ENCODE measurements at regions of chr11 and their contacts with region 1.

Region 1: GRCh38 chr11:11798586-11799438 is 43.0 kb upstream of the USP47 start:
- DNase-seq: peak; percentile 44 to 90 (median 77)
- ATAC-seq: peak; percentile 93
- H3K4me3 ChIP-seq: no peak overlapping the region
- H3K4me3 Mint-ChIP-seq: no peak overlapping the region
- H3K27ac ChIP-seq: no peak overlapping the region
- H3K27ac Mint-ChIP-seq: no peak overlapping the region
- H3K4me1 ChIP-seq: no peaks in the 10 kb centered on the region
- H3K4me1 Mint-ChIP-seq: no peaks in the 10 kb centered on the region
- H3K27me3 ChIP-seq: no peaks in the 10 kb centered on the region
- H3K27me3 Mint-ChIP-seq: peaks cover 28% of the 10 kb centered on the region
- CTCF ChIP-seq: peak; percentile 96

Region 2: GRCh38 chr11:10139656-10140055 is 1659.2 kb before region 1 on chr11:
- CTCF ChIA-PET with region 1: no interaction called
- POLR2A ChIA-PET with region 1: no interaction called
- intact Hi-C with region 1: no loop called
- DNase-seq: no peak
- ATAC-seq: no peak
- H3K4me3 ChIP-seq: no peak overlapping the region
- H3K4me3 Mint-ChIP-seq: no peak overlapping the region
- H3K27ac ChIP-seq: no peak overlapping the region
- H3K27ac Mint-ChIP-seq: no peak overlapping the region
- H3K4me1 ChIP-seq: no peaks in the 10 kb centered on the region
- H3K4me1 Mint-ChIP-seq: no peaks in the 10 kb centered on the region
- H3K27me3 ChIP-seq: no peaks in the 10 kb centered on the region
- H3K27me3 Mint-ChIP-seq: no peaks in the 10 kb centered on the region
- CTCF ChIP-seq: no peak

Region 3: DNA sequence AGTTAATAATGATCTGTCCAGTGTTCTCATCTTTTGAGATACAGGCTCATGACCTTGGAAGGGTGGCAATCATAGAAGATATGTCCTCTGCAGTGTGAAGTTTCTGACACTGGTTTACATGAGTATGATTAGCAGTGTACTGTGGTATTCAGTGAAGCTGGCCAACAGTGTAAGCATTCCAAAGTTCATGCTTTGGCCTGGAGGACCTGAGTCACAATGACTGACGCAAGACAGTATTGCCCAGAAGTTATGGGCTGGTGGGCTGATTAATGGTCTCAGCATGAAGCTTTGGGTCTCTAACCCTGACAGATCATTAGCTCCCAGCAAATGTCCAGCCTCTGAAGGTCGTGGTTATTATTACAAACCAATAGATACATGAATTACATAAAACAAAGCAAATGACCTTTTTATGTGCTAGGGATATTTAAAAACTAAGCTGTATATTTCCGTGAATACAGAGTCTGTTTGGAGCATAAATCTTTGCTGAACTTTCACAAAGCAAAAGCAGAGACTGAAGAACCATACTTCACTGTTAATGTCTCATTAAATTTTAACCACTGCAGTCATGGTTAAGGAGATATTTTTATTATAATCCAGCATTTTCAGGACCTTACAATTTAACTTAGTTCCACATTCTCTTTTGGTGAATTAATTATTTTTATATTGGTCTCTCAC is 14.6 kb after region 1 on chr11:
- CTCF ChIA-PET with region 1: interaction called, 32 read pairs
- POLR2A ChIA-PET with region 1: interaction called, 3 read pairs
- intact Hi-C with region 1: no loop called
- DNase-seq: no peak
- ATAC-seq: no peak
- H3K4me3 ChIP-seq: no peak overlapping the region
- H3K4me3 Mint-ChIP-seq: no peak overlapping the region
- H3K27ac ChIP-seq: no peak overlapping the region
- H3K27ac Mint-ChIP-seq: no peak overlapping the region
- H3K4me1 ChIP-seq: no peaks in the 10 kb centered on the region
- H3K4me1 Mint-ChIP-seq: no peaks in the 10 kb centered on the region
- H3K27me3 ChIP-seq: peaks cover 0 to 2% of the 10 kb centered on the region in 2 experiments
- H3K27me3 Mint-ChIP-seq: peaks cover 7% of the 10 kb centered on the region
- CTCF ChIP-seq: no peak

Region 4: DNA sequence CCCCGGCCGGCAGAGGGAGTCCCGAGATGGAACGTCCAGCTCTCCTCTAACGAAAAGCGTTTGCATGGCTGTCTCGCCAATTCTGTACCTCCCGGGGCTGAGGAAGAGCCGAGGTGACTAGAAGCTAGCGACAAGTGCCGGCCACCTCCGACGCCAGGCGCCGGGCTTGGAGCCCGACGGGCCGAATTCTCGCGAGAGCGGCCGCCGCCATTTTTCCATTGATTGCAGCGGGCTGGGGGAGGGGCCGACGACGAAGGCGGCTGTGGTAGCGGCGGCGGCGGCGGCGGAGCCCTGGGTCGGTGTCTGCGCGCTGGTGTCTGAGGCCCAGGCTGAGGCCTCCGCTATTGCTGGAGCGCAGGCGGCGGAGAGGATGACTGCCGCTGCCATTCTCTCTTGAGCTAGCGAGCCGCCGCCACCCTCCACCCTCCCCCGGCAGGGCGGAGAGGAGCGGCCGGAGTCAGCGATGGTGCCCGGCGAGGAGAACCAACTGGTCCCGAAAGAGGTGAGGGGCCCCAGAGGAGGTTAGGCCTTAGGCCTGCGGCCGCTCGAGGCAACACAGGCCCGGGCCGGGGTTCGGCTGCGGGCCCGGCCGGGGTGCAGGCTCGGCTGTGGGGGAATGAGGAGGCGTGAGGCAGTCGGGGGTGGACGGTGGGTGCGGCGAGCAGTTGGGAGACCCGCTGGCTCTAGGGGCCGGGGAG is 43.1 kb after region 1 on chr11 and contains the start of gene USP47:
- CTCF ChIA-PET with region 1: interaction called, 22 read pairs
- POLR2A ChIA-PET with region 1: no interaction called
- intact Hi-C with region 1: no loop called
- DNase-seq: peak; percentile 90 to 98 (median 94)
- ATAC-seq: peak; percentile 79
- H3K4me3 ChIP-seq: peak within 1 kb of the TSS; percentile 77 to 92
- H3K4me3 Mint-ChIP-seq: no peak within 1 kb of the TSS
- H3K27ac ChIP-seq: peak within 1 kb of the TSS; percentile 92 to 95
- H3K27ac Mint-ChIP-seq: no peak within 1 kb of the TSS
- H3K4me1 ChIP-seq: peaks cover 37% of the 10 kb centered on the region
- H3K4me1 Mint-ChIP-seq: peaks cover 26% of the 10 kb centered on the region
- H3K27me3 ChIP-seq: no peaks in the 10 kb centered on the region
- H3K27me3 Mint-ChIP-seq: peaks cover 6% of the 10 kb centered on the region
- CTCF ChIP-seq: peak; percentile 46
- total RNA-seq, gene USP47: 93.4 to 100 TPM

Region 5: GRCh38 chr11:11876458-11876857 is 77.6 kb after region 1 on chr11:
- CTCF ChIA-PET with region 1: interaction called, 20 read pairs
- POLR2A ChIA-PET with region 1: no interaction called
- intact Hi-C with region 1: no loop called
- DNase-seq: peak in 2 of 9 experiments; percentile 17 to 40
- ATAC-seq: no peak
- H3K4me3 ChIP-seq: no peak overlapping the region
- H3K4me3 Mint-ChIP-seq: no peak overlapping the region
- H3K27ac ChIP-seq: no peak overlapping the region
- H3K27ac Mint-ChIP-seq: no peak overlapping the region
- H3K4me1 ChIP-seq: peaks cover 22% of the 10 kb centered on the region
- H3K4me1 Mint-ChIP-seq: peaks cover 64% of the 10 kb centered on the region
- H3K27me3 ChIP-seq: no peaks in the 10 kb centered on the region
- H3K27me3 Mint-ChIP-seq: no peaks in the 10 kb centered on the region
- CTCF ChIP-seq: no peak

Region 6: DNA sequence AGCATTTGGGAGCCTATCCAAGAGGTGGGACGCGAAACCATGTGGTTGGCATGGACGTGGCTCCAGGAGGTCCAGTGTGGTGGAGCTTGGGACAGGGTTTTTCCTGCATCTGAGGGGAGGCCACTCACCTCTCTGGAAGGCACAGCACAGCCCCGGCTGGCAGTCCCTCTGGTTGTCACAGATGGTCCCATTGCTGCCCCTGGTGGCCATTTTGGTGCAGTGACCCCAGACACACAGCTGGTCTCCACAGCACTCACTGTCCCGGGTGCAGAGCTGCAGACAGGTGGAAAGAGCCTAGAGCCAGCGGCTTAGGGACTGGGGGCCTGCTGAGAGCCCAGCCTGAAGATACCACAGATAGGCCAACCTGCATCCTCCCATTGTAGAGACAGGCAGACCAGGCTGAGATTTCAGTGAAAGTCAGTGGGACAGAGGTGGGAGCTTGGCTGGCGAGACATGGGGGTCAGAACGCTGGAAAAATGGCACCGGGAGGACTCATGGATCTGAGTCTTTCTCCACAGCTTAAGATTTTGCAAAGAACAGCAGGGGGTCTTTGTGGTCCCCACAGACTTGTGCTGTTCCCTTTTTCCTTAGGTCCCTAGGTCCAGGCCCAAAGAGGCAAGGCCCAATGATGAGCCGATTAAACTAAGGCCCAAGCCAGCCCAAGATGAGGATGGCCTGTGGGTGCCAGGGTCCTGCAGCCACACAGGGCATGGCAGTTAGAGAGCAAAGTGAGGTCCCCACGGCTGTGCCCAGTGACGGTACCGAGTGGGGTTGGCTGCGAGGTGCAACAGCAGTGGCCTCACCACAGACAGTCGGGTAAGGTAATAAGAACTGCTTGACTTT is 168.2 kb after region 1 on chr11:
- CTCF ChIA-PET with region 1: interaction called, 13 read pairs
- POLR2A ChIA-PET with region 1: no interaction called
- intact Hi-C with region 1: no loop called
- DNase-seq: peak; percentile 46 to 76 (median 63)
- ATAC-seq: peak; percentile 97
- H3K4me3 ChIP-seq: no peak overlapping the region
- H3K4me3 Mint-ChIP-seq: no peak overlapping the region
- H3K27ac ChIP-seq: no peak overlapping the region
- H3K27ac Mint-ChIP-seq: no peak overlapping the region
- H3K4me1 ChIP-seq: no peaks in the 10 kb centered on the region
- H3K4me1 Mint-ChIP-seq: peaks cover 3% of the 10 kb centered on the region
- H3K27me3 ChIP-seq: no peaks in the 10 kb centered on the region
- H3K27me3 Mint-ChIP-seq: no peaks in the 10 kb centered on the region
- CTCF ChIP-seq: peak; percentile 78

Region 7: GRCh38 chr11:12281571-12282478 is 483.0 kb after region 1 on chr11:
- CTCF ChIA-PET with region 1: interaction called, 16 read pairs
- POLR2A ChIA-PET with region 1: no interaction called
- intact Hi-C with region 1: loop called (anchors 2 to 5 kb)
- DNase-seq: peak; percentile 53 to 87 (median 81)
- ATAC-seq: peak; percentile 64
- H3K4me3 ChIP-seq: no peak overlapping the region
- H3K4me3 Mint-ChIP-seq: no peak overlapping the region
- H3K27ac ChIP-seq: no peak overlapping the region
- H3K27ac Mint-ChIP-seq: no peak overlapping the region
- H3K4me1 ChIP-seq: no peaks in the 10 kb centered on the region
- H3K4me1 Mint-ChIP-seq: no peaks in the 10 kb centered on the region
- H3K27me3 ChIP-seq: no peaks in the 10 kb centered on the region
- H3K27me3 Mint-ChIP-seq: no peaks in the 10 kb centered on the region
- CTCF ChIP-seq: peak; percentile 92